PC-9 (cell line): ENCODE measurements at regions of chr5 and their contacts with region 1.

Region 1: DNA sequence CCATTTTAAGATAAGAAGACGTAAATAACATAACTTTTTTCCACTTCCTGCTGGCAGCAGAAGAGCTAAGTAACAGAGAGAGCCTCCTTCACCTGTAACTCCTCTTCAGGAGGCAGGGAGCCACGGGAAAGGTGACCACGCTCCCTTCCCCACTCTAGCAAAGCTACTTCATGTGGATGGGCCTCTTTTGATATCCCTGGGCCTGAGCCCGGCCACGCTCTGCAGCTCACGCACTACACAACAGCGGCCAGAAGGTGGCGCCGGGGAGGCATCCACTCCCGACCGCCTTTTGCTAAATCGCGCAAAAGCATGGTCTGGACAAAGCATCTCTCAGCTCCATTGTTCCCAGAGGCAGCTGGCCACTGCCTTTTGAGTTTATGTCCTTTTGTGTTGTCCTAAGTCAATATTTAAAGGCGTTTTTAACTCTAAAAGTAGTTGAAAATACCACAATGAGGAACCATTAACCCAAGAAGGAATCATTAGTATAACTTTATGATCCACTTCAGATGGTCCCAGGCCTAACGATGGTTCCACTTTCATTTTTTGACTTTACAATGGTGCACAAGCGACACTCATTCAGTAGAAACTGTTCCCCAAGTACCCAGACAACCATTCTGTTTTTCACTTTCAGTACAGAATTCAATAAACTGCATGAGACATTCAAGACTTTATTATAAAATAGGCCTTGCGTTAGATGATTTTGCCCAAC is 23.6 kb downstream of the CMBL start:
- DNase-seq: peak; percentile 46 to 93
- H3K4me3 ChIP-seq: no peak overlapping the region
- H3K27ac ChIP-seq: no peak overlapping the region
- H3K4me1 ChIP-seq: peaks cover 14% of the 10 kb centered on the region
- H3K27me3 ChIP-seq: no peaks in the 10 kb centered on the region
- CTCF ChIP-seq: peak; percentile 96

Region 2: DNA sequence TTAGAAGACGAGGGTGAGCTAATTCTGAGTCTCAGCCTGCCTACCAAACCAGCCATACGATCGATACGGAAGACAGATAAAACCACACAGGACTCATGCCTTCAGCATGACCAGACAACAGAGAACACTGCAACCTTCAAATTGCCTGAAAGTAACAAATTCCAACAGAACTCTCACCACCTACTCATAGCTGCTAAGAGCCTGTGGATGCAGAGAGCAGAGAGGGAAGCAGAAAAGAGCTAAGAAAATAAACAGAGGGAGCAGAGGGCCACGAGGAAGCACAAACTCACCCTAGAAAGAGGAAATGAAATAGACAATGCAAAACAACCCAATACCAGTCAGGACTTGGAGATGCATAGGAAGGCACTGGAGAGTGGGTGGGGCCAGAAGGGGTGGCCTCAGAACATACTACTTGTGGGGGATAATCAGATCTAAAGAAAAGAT is 567.2 kb before region 1 on chr5:
- CTCF ChIA-PET with region 1: no interaction called
- POLR2A ChIA-PET with region 1: no interaction called
- intact Hi-C with region 1: no loop called
- DNase-seq: peak in 1 of 2 experiments; percentile 40
- H3K4me3 ChIP-seq: no peak overlapping the region
- H3K27ac ChIP-seq: no peak overlapping the region
- H3K4me1 ChIP-seq: peaks cover 14% of the 10 kb centered on the region
- H3K27me3 ChIP-seq: no peaks in the 10 kb centered on the region
- CTCF ChIP-seq: no peak

Region 3: DNA sequence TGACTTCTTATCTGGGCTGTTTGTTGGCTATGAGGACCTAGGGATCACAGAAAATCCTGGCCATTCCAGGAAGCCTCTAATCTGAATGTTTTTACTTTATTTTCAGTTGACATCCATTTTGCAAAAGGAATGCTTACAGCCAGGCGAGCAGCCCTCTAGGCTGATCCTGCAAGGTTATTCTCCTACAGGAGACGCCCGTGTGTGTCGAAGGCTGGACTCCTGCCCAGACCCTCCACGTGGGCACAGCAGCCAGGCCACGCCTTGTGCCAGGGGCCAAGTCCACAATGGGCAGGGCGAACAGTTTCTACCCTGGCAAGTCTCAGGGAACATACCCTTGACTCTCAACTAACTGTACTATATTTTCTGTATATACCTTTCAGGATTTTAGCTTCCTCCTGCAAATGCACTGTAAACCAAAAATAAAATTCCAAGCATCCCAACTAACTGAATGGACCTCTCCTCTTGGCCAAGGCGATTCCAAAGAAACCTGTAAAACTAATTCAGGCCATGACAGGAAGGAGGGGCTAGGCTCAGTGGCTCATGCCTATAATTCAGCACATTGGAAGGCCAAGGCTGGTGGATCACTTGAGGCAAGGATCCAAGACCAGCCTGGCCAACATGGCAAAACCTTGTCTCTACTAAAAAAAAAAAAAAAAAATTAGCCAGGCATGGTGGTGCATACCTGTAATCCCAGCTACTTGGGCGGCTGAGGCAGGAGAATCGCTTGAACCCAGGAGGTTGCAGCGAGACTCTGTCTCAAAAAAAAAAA is 17.9 kb after region 1 on chr5:
- CTCF ChIA-PET with region 1: interaction called, 5 read pairs
- POLR2A ChIA-PET with region 1: interaction called, 8 read pairs
- intact Hi-C with region 1: loop called (anchors 1 kb)
- DNase-seq: peak; percentile 75 to 98
- H3K4me3 ChIP-seq: no peak overlapping the region
- H3K27ac ChIP-seq: peak overlapping the region; percentile 13
- H3K4me1 ChIP-seq: peaks cover 40% of the 10 kb centered on the region
- H3K27me3 ChIP-seq: no peaks in the 10 kb centered on the region
- CTCF ChIP-seq: no peak

Region 4: GRCh38 chr5:10333154-10334006 is 49.3 kb after region 1 on chr5:
- CTCF ChIA-PET with region 1: no interaction called
- POLR2A ChIA-PET with region 1: no interaction called
- intact Hi-C with region 1: loop called (anchors 1 kb)
- DNase-seq: peak in 1 of 2 experiments; percentile 67
- H3K4me3 ChIP-seq: peak overlapping the region; percentile 60
- H3K27ac ChIP-seq: no peak overlapping the region
- H3K4me1 ChIP-seq: peaks cover 5% of the 10 kb centered on the region; the same call in 1 of the 2 replicates
- H3K27me3 ChIP-seq: peaks cover 11% of the 10 kb centered on the region; the same call in 1 of the 2 replicates
- CTCF ChIP-seq: no peak

Region 5: DNA sequence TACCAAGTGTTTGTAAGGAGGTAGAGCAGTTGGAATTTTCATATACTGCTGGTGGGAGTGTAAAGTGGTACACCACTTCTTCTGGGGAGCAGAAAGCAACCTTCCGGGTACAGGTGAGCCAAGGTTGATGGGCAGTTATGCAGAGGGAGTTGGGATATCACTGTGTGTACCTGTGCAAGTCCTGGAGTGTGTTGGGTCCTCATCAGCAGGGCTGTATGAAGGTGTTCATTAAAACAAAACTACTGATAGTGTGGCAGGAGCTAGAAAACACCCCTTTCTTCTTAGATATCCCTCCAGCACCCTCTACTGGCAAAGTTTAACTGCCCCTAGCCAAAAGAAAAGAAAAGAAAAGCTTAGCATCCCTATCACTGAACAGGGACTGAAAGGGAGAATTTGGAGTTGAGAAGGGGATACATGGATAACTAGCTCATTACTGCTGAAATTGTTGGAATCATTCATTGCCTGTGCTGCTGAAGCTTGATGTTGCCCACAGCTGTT is 80.2 kb after region 1 on chr5:
- CTCF ChIA-PET with region 1: interaction called, 26 read pairs
- POLR2A ChIA-PET with region 1: interaction called, 3 read pairs
- intact Hi-C with region 1: loop called (anchors 1 kb)
- DNase-seq: peak in 1 of 2 experiments; percentile 23
- H3K4me3 ChIP-seq: no peak overlapping the region
- H3K27ac ChIP-seq: no peak overlapping the region
- H3K4me1 ChIP-seq: 0 out of 2 replicates have a peak, but pooled peaks cover 19% of the 10 kb centered on the region
- H3K27me3 ChIP-seq: no peaks in the 10 kb centered on the region
- CTCF ChIP-seq: peak; percentile 61

Region 6: DNA sequence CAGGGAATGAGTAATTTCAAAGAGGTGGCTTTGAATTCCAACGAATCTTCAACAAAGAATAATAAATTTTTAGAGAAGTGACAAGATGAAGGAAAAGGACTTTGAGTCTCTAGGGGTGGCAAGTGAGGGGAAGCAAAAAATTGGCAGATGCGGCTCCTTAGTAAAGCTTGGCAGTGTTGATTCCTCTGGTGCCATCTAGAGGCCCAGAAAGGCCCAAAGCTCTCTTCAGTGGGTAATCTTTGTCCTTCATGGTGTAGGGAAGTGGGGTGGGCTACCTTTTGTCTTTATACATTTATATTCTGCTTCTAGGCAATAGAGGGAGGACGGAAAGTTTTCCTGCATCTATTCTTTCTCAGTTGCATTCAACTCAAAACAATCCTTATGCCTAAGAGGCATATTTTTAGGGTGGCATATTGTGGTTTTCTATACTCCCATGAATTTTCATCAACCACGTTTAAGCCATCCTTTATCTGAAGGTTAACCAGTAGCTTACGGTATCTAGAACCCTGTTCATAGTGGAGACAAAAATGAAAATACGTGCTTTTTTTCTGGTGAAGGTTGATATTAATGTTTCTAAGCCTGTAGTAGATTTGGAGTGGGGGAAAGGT is 140.1 kb after region 1 on chr5:
- CTCF ChIA-PET with region 1: interaction called, 8 read pairs
- POLR2A ChIA-PET with region 1: no interaction called
- intact Hi-C with region 1: loop called (anchors 1 kb)
- DNase-seq: no peak
- H3K4me3 ChIP-seq: no peak overlapping the region
- H3K27ac ChIP-seq: no peak overlapping the region
- H3K4me1 ChIP-seq: peaks cover 15% of the 10 kb centered on the region
- H3K27me3 ChIP-seq: no peaks in the 10 kb centered on the region
- CTCF ChIP-seq: peak; percentile 51

Region 7: GRCh38 chr5:10627160-10627701 is 343.1 kb after region 1 on chr5:
- CTCF ChIA-PET with region 1: interaction called, 3 read pairs
- POLR2A ChIA-PET with region 1: no interaction called
- intact Hi-C with region 1: loop called (anchors 1 kb)
- DNase-seq: no peak
- H3K4me3 ChIP-seq: no peak overlapping the region
- H3K27ac ChIP-seq: peak overlapping the region; percentile 5; the same call in 1 of the 2 replicates
- H3K4me1 ChIP-seq: peaks cover 7% of the 10 kb centered on the region; the same call in 1 of the 2 replicates
- H3K27me3 ChIP-seq: no peaks in the 10 kb centered on the region
- CTCF ChIP-seq: no peak